Activated T-helper 2 cell treated with anti-CD3 and anti-CD28 coated beads, Interferon-gamma antibody, Interleukin-2, Interleukin-4, amounts not matched to agents 10 μg/mL and 5 μg/mL and 100 μg/mL, durations not matched to agents 14 hours and 24 hours and 36 hours (primary cell): ENCODE measurements at regions of chr6 and their contacts with region 1.

Region 1: GRCh38 chr6:108052706-108053105 is 21.8 kb downstream of the OSTM1 start:
- DNase-seq: no peak
- H3K4me3 Mint-ChIP-seq: no peak overlapping the region
- H3K27ac Mint-ChIP-seq: no peak overlapping the region
- H3K4me1 Mint-ChIP-seq: no peaks in the 10 kb centered on the region
- H3K27me3 Mint-ChIP-seq: no peaks in the 10 kb centered on the region

Region 2: GRCh38 chr6:107763946-107764345 is 288.8 kb before region 1 on chr6:
- intact Hi-C with region 1: no loop called
- DNase-seq: no peak
- H3K4me3 Mint-ChIP-seq: no peak overlapping the region
- H3K27ac Mint-ChIP-seq: no peak overlapping the region
- H3K4me1 Mint-ChIP-seq: peaks cover 2% of the 10 kb centered on the region
- H3K27me3 Mint-ChIP-seq: peaks cover 16% of the 10 kb centered on the region

Region 3: DNA sequence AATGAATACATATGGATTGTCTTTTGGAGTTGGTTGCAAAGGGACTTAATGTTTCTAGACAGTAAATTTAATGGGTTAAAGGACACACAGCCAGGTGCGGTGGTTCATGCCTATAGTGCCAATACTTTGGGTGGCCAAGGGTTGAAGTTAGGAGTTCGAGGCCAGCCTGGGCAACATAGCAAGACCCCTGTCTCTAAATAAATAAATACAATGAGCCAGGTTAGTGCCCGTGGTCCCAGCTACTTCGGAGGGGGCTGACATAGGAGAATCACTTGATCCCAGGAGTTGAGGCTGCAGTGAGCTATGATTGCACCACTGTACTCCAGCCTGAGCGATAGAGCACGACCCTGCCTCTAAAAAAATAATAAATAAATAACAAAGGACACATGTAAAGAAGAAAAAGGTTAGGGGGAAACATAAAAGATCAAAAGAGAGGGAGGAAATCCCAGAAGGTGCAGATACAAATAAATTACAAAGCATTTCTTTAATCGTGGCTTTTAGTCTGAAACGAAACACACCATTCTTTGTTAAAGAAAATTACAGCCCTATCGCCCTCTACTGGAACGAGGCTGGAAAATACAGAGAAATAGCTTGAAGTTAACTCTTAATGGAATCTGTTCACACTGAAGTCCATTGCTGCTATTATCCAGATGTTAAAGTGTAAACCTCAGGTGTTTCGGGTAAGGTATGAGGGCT is 186.0 kb before region 1 on chr6:
- intact Hi-C with region 1: loop called (anchors 10 kb)
- DNase-seq: no peak
- H3K4me3 Mint-ChIP-seq: no peak overlapping the region
- H3K27ac Mint-ChIP-seq: no peak overlapping the region
- H3K4me1 Mint-ChIP-seq: peaks cover 12% of the 10 kb centered on the region
- H3K27me3 Mint-ChIP-seq: peaks cover 6% of the 10 kb centered on the region

Region 4: DNA sequence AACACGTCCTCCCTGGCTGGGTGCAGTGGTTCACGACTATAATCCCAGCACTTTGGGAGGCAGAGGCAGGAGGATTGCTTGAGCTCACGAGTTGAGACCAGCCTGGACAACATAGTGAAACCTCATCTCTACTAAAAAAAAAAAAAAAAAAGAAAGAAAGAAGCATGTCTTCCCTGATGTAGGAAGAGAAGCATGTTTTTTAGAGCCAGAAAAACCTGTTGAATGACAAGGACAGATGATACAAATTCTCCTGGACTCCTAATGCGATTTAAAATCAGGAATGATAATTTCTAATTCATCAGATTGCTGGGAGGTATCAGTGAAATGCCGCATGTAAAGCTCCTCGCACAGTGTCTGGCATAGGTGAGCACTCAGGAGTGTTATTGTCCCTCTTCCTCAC is 71.0 kb before region 1 on chr6:
- intact Hi-C with region 1: loop called (anchors 2 kb)
- DNase-seq: no peak
- H3K4me3 Mint-ChIP-seq: no peak overlapping the region
- H3K27ac Mint-ChIP-seq: no peak overlapping the region
- H3K4me1 Mint-ChIP-seq: peaks cover 3% of the 10 kb centered on the region
- H3K27me3 Mint-ChIP-seq: peaks cover 19% of the 10 kb centered on the region